Pancreas (tissue), 10 donors: ENCODE measurements at regions of chr1 and their contacts with region 1.

Region 1: DNA sequence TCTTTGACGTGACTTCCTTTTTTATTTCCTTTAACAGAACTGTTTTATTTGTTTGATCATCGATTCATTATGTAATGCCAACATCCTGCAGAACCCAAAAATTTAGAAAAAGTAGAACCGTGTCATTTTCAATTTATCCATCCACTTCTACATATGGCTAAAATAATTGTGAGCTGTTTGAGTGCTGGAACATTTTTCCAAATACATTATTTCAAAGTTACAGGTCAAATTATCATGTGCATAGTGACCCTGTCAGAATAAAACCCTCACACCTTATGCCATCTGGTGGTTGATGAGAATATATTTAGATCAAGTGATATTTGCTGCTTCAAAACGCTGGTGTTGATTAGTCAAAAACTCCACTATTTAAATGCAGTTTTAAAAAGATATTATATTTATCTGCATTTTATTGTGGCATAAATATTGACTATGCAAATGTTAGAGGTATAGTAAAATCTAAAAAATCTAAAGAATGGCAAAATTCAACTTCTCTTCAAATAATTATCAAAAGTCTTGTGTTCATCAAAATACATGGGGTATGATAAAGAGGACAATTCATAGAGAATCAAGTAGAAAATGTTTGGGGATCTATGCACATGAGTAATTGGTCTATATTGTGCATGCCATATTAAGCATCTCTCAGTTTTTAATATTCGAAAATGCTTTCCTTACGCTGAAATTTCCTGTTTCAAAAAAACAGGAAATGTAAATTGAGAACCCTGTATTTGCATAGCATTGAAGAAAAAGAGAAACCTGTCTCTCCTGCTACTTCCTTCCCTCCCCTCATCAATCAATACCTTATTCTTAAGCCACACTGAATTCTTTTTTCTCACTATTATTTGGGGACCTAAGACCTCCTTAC is 39.7 kb downstream of the UBE2U start:
- DNase-seq: no peak
- ATAC-seq: peak; percentile 41 to 73 (median 68)
- H3K4me3 ChIP-seq: peak overlapping the region in 1 of 4 donors; percentile 2
- H3K27ac ChIP-seq: peak overlapping the region in 1 of 4 donors; percentile 4
- H3K4me1 ChIP-seq: peaks cover 9 to 21% (median 16%) of the 10 kb centered on the region in 3 donors
- H3K27me3 ChIP-seq: no peaks in the 10 kb centered on the region
- CTCF ChIP-seq: peak in 2 of 4 donors; percentile 10 to 32

Region 2: GRCh38 chr1:63615768-63616420 is 627.2 kb before region 1 on chr1:
- intact Hi-C with region 1: loop called in 1 of 3 experiments (anchors 5 kb)
- DNase-seq: peak in 4 of 6 donors; percentile 37 to 77 (median 46)
- ATAC-seq: peak; percentile 76 to 90 (median 88)
- H3K4me3 ChIP-seq: no peak overlapping the region
- H3K27ac ChIP-seq: no peak overlapping the region
- H3K4me1 ChIP-seq: peaks cover 0 to 17% (median 4%) of the 10 kb centered on the region in 3 donors
- H3K27me3 ChIP-seq: no peaks in the 10 kb centered on the region
- CTCF ChIP-seq: peak; percentile 50 to 80 (median 60)

Region 3: GRCh38 chr1:63674238-63674864 is 568.8 kb before region 1 on chr1:
- intact Hi-C with region 1: loop called in 1 of 3 experiments (anchors 10 kb)
- DNase-seq: peak; percentile 70 to 95 (median 90)
- ATAC-seq: peak; percentile 91 to 97 (median 94)
- H3K4me3 ChIP-seq: no peak overlapping the region
- H3K27ac ChIP-seq: peak overlapping the region; percentile 44 to 71 (median 56)
- H3K4me1 ChIP-seq: peaks cover 6 to 20% (median 11%) of the 10 kb centered on the region in 3 donors
- H3K27me3 ChIP-seq: no peaks in the 10 kb centered on the region
- CTCF ChIP-seq: peak; percentile 32 to 50 (median 42)

Region 4: DNA sequence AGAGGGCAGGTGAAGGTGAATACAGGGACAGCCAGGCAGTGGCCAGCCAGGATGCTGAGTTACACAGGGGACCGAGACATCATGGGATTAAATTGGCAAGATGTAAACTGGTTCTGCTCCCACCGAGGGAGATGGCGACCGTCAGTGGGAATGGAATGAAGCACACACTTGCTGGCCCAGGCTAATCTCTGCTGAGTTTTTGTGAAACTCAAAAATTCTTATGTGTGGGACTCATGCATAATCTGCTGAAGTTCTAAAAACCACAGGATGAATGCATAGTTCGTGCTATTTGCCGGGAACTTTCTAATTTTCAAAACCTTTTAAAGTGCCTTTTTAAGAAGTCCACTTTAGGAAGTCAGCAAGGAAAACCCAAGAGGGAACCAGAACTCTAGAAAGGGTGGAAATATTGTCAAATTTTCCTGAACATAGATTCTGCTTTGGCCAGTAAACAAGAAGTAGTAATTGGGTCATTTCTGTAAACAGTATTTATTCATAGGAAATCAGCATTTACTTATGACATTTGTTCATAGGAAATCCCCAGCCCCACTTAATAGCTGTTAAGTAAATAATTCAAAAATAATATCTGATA is 554.7 kb before region 1 on chr1:
- intact Hi-C with region 1: loop called in 1 of 3 experiments (anchors 10 kb)
- DNase-seq: no peak
- ATAC-seq: no peak
- H3K4me3 ChIP-seq: no peak overlapping the region
- H3K27ac ChIP-seq: no peak overlapping the region
- H3K4me1 ChIP-seq: peaks cover 8 to 10% (median 9%) of the 10 kb centered on the region in 3 donors
- H3K27me3 ChIP-seq: no peaks in the 10 kb centered on the region
- CTCF ChIP-seq: no peak